Esophagus muscularis mucosa (tissue), 4 donors: ENCODE measurements at regions of chr17 and their contacts with region 1.

Region 1: GRCh38 chr17:35373534-35373983 is at the start of gene SLFN11:
- DNase-seq: peak; percentile 96
- H3K4me3 ChIP-seq: peak within 1 kb of the TSS; percentile 57 to 85 (median 63)
- H3K27ac ChIP-seq: peak within 1 kb of the TSS; percentile 81 to 94 (median 90)
- H3K4me1 ChIP-seq: peaks cover 12 to 40% (median 24%) of the 10 kb centered on the region in 4 donors
- H3K27me3 ChIP-seq: peaks cover 0 to 38% (median 0%) of the 10 kb centered on the region in 4 donors
- CTCF ChIP-seq: no peak
- EP300 ChIP-seq: no peak
- POLR2A ChIP-seq: peak; percentile 85
- total RNA-seq, gene SLFN11: 16.2 to 30.5 (median 22.7) TPM

Region 2: DNA sequence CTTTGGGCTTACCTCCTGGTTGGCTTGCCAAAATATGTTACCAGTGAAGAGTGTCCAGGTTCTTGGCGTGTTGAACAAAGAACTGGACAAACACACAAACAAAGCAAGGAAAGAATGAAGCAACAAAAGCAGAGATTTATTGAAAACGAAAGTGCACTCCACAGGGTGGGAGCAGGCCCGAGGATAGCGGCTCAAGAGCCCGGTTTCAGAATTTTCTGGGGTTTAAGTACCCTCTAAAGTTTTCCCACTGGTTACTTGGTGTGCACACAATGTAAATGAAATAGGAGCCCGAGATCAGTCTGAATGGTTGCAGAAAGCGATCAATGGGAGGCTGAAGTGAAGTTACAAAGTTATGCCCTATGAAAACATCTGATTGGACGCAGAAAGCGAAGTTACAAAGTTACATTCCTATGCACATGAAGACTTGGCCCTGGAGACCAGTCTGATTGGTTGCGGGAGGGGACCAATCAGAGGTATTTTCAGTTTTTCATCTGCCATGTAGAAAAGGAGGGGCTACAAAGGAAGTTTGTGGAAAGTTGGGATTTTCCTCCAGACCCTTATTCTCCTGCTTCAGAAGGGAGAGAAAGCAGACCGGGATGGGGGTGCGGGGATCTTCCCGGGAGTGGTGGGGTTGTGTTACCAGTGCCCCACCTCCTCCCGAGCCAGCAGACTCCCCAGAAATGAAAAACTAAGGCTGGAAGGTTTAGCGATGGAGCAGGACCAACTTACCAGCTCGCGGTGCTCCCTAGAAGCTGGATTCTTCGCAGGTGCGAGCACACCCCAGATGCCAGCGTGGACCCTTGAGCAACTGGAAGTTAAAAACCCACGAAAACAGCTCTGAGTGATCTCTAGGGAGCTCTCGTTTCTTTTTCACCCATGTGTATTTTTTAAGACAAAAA is 58.9 kb after region 1 on chr17 and contains the start of gene SLFN12:
- intact Hi-C with region 1: loop called (anchors 5 kb)
- DNase-seq: no peak
- H3K4me3 ChIP-seq: peak within 1 kb of the TSS; percentile 57 to 69 (median 60)
- H3K27ac ChIP-seq: peak within 1 kb of the TSS; percentile 83 to 86 (median 85)
- H3K4me1 ChIP-seq: peaks cover 20 to 29% (median 22%) of the 10 kb centered on the region in 4 donors
- H3K27me3 ChIP-seq: no peaks in the 10 kb centered on the region
- CTCF ChIP-seq: no peak
- EP300 ChIP-seq: no peak
- POLR2A ChIP-seq: no peak
- total RNA-seq, gene SLFN12: 6.6 to 11.2 (median 7.7) TPM